ENCODE measurements at regions of chr11 and their contacts with region 1.

Region 1: DNA sequence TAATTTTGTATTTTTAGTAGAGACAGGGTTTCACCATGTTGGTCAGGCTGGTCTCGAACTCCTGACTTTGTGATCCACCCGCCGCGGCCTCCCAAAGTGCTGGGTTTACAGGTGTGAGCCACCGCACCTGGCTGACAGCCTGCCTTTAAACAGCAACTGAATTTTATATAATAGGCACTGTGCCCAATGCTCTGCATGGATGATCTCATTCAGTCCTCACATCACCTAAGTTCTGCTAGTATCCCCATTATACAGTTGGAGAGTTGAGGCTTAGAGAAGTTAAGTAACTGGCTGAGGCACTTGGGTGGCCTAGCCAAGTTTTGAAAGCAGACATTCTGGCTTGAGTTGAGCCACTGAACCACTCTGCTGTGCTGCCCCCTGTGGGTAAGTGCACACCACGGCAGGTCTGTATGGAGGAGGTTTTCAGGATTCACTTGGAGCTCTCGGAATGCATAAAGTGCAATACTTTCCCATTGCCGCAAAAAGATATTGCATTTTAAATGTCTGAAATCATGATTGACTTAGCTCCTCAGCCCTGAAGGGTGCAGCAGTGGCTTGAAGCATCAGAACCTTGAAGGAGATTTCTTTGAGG is 112.4 kb downstream of the LDLRAD3 start:
- DNase-seq: peak in 1 of 2 experiments; percentile 74
- H3K4me3 ChIP-seq: no peak overlapping the region
- H3K27ac ChIP-seq: no peak overlapping the region
- H3K4me1 ChIP-seq: peaks cover 0 to 14% (median 4%) of the 10 kb centered on the region in 4 experiments; a peak in 3 of 7 replicates
- H3K27me3 ChIP-seq: no peaks in the 10 kb centered on the region
- CTCF ChIP-seq: peak; percentile 85 to 94 (median 88)
- EP300 ChIP-seq: no peak
- POLR2A ChIP-seq: no peak
- RAD21 ChIP-seq: peak; percentile 85 to 89

Region 2: GRCh38 chr11:36002196-36002595 is 54.1 kb before region 1 on chr11:
- CTCF ChIA-PET with region 1: interaction called, 11 read pairs
- POLR2A ChIA-PET with region 1: no interaction called
- DNase-seq: peak in 1 of 2 experiments; percentile 9
- H3K4me3 ChIP-seq: no peak overlapping the region
- H3K27ac ChIP-seq: peak overlapping the region; percentile 73
- H3K4me1 ChIP-seq: peaks cover 3 to 16% (median 8%) of the 10 kb centered on the region in 4 experiments
- H3K27me3 ChIP-seq: no peaks in the 10 kb centered on the region
- CTCF ChIP-seq: no peak
- EP300 ChIP-seq: no peak
- POLR2A ChIP-seq: no peak
- RAD21 ChIP-seq: no peak

Measured in H1 (cell line).